ENCODE measurements at regions of chr1 and their contacts with region 1.

Region 1: GRCh38 chr1:172934417-172934762 is 116.4 kb downstream of the TNFSF18 start:
- DNase-seq: no peak
- H3K4me3 ChIP-seq: no peak overlapping the region
- H3K27ac ChIP-seq: peak overlapping the region; percentile 90
- H3K4me1 ChIP-seq: peaks cover 53% of the 10 kb centered on the region
- H3K27me3 ChIP-seq: no peaks in the 10 kb centered on the region
- CTCF ChIP-seq: no peak
- POLR2A ChIP-seq: no peak

Region 2: DNA sequence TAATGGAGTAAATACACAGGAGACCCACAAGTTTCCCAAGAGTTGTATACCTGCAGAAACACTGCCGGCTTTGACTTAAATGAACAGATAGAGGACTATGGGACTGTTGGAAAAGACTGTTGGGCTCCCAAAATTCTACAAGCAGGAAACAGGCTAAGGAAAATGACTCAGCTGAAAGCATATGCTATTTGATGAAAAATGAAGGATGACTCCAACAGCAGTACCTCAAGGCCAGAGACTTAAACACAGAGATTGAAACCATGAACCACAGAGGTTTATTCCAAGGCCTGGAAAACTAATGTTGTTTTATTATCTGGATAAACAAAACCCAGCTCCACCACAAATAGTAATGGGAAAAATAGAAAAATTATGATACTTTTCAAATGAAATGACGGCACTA is 71.4 kb before region 1 on chr1:
- CTCF ChIA-PET with region 1: no interaction called
- POLR2A ChIA-PET with region 1: no interaction called
- dilution Hi-C with region 1: no loop called
- intact Hi-C with region 1: loop called (anchors 1 kb)
- DNase-seq: no peak
- H3K4me3 ChIP-seq: no peak overlapping the region
- H3K27ac ChIP-seq: no peak overlapping the region
- H3K4me1 ChIP-seq: peaks cover 17% of the 10 kb centered on the region
- H3K27me3 ChIP-seq: no peaks in the 10 kb centered on the region
- CTCF ChIP-seq: no peak
- POLR2A ChIP-seq: no peak

Region 3: DNA sequence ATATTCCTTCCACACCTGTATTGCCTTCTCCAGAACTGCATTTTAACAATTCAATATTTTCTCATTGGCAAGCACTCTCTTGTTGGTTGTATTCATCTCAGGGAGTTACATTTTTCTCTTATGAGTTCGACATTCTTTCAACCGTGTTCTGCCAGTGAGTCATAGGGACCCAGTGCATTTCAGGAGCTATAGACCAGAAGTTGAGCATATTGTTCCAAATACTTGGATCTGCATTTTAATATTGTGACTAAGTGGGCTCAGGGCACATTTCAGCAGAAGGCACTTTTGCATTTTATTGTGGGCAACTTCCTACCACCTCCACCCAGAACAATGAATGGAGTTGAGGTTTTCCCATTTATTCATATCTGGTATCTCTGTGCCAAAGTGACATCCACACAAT is 16.4 kb before region 1 on chr1:
- CTCF ChIA-PET with region 1: interaction called, 18 read pairs
- POLR2A ChIA-PET with region 1: interaction called, 3 read pairs
- dilution Hi-C with region 1: no loop called
- intact Hi-C with region 1: loop called (anchors 1 kb)
- DNase-seq: peak; percentile 96
- H3K4me3 ChIP-seq: no peak overlapping the region
- H3K27ac ChIP-seq: peak overlapping the region; percentile 84
- H3K4me1 ChIP-seq: peaks cover 62% of the 10 kb centered on the region
- H3K27me3 ChIP-seq: no peaks in the 10 kb centered on the region
- CTCF ChIP-seq: no peak
- POLR2A ChIP-seq: peak; percentile 68

Region 4: GRCh38 chr1:172948457-172948856 is 14.1 kb after region 1 on chr1:
- CTCF ChIA-PET with region 1: interaction called, 4 read pairs
- POLR2A ChIA-PET with region 1: interaction called, 3 read pairs
- dilution Hi-C with region 1: no loop called
- intact Hi-C with region 1: loop called (anchors 1 kb)
- DNase-seq: peak; percentile 89
- H3K4me3 ChIP-seq: no peak overlapping the region
- H3K27ac ChIP-seq: peak overlapping the region; percentile 95
- H3K4me1 ChIP-seq: peaks cover 36% of the 10 kb centered on the region
- H3K27me3 ChIP-seq: no peaks in the 10 kb centered on the region
- CTCF ChIP-seq: no peak
- POLR2A ChIP-seq: peak; percentile 25

Region 5: GRCh38 chr1:172955161-172955815 is 20.9 kb after region 1 on chr1:
- CTCF ChIA-PET with region 1: no interaction called
- POLR2A ChIA-PET with region 1: interaction called, 3 read pairs
- dilution Hi-C with region 1: no loop called
- intact Hi-C with region 1: loop called (anchors 1 kb)
- DNase-seq: peak; percentile 85
- H3K4me3 ChIP-seq: no peak overlapping the region
- H3K27ac ChIP-seq: peak overlapping the region; percentile 90
- H3K4me1 ChIP-seq: peaks cover 43% of the 10 kb centered on the region
- H3K27me3 ChIP-seq: no peaks in the 10 kb centered on the region
- CTCF ChIP-seq: no peak
- POLR2A ChIP-seq: peak; percentile 33

Region 6: DNA sequence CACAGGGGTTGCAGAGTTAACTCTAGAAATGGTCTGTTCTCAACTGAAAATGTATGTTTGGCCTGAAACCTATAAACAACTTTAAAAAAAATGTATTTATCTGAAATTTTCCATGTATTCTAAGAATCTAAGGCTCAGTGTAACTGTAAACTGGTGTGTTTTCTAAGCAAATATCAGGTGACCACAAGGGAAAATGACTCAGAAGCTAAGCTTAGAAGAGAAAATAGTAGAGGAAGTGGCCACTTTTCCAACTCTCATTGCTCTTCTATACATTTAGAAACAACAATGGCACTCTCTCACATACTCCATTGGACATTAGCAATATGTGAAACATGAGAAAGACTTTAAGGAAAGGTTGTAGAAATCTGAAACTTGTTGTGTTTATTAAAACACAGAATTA is 108.9 kb after region 1 on chr1:
- CTCF ChIA-PET with region 1: no interaction called
- POLR2A ChIA-PET with region 1: no interaction called
- dilution Hi-C with region 1: no loop called
- intact Hi-C with region 1: loop called (anchors 1 kb)
- DNase-seq: peak; percentile 80
- H3K4me3 ChIP-seq: peak overlapping the region in 1 of 3 experiments; percentile 7
- H3K27ac ChIP-seq: peak overlapping the region; percentile 83
- H3K4me1 ChIP-seq: peaks cover 35% of the 10 kb centered on the region
- H3K27me3 ChIP-seq: no peaks in the 10 kb centered on the region
- CTCF ChIP-seq: no peak
- POLR2A ChIP-seq: no peak

Region 7: GRCh38 chr1:173190101-173190906 is 255.9 kb after region 1 on chr1:
- CTCF ChIA-PET with region 1: no interaction called
- POLR2A ChIA-PET with region 1: no interaction called
- dilution Hi-C with region 1: no loop called
- intact Hi-C with region 1: loop called (anchors 1 kb)
- DNase-seq: peak; percentile 99
- H3K4me3 ChIP-seq: no peak overlapping the region
- H3K27ac ChIP-seq: peak overlapping the region; percentile 98
- H3K4me1 ChIP-seq: peaks cover 58% of the 10 kb centered on the region
- H3K27me3 ChIP-seq: no peaks in the 10 kb centered on the region
- CTCF ChIP-seq: no peak
- POLR2A ChIP-seq: peak; percentile 35

Region 8: GRCh38 chr1:174297351-174297750 is 1363.0 kb after region 1 on chr1:
- CTCF ChIA-PET with region 1: no interaction called
- POLR2A ChIA-PET with region 1: no interaction called
- dilution Hi-C with region 1: no loop called
- intact Hi-C with region 1: no loop called
- DNase-seq: no peak
- H3K4me3 ChIP-seq: no peak overlapping the region
- H3K27ac ChIP-seq: no peak overlapping the region
- H3K4me1 ChIP-seq: peaks cover 4% of the 10 kb centered on the region
- H3K27me3 ChIP-seq: no peaks in the 10 kb centered on the region
- CTCF ChIP-seq: no peak
- POLR2A ChIP-seq: no peak

Measured in endothelial cell of umbilical vein (primary cell).